ENCODE measurements at regions of chr7 and their contacts with region 1.

Region 1: GRCh38 chr7:132580717-132581285 is 4.5 kb upstream of the PLXNA4 start:
- DNase-seq: peak; percentile 70 to 76 (median 74)
- ATAC-seq: peak; percentile 25 to 60 (median 44)
- H3K4me3 ChIP-seq: no peak overlapping the region
- H3K27ac ChIP-seq: no peak overlapping the region
- H3K4me1 ChIP-seq: peaks cover 0 to 18% (median 6%) of the 10 kb centered on the region in 12 donors
- H3K27me3 ChIP-seq: peaks cover 0 to 26% (median 0%) of the 10 kb centered on the region in 9 donors
- CTCF ChIP-seq: peak; percentile 60 to 87 (median 76)
- POLR2A ChIP-seq: no peak

Region 2: GRCh38 chr7:131945313-131945911 is 635.4 kb before region 1 on chr7:
- intact Hi-C with region 1: loop called in 9 of 10 experiments (anchors 2 to 10 kb)
- DNase-seq: peak; percentile 23 to 76 (median 34)
- ATAC-seq: peak in 3 of 4 donors; percentile 58 to 73 (median 59)
- H3K4me3 ChIP-seq: peak overlapping the region in 8 of 12 donors; percentile 19 to 40 (median 29)
- H3K27ac ChIP-seq: no peak overlapping the region
- H3K4me1 ChIP-seq: peaks cover 0 to 21% (median 3%) of the 10 kb centered on the region in 12 donors
- H3K27me3 ChIP-seq: peaks cover 0 to 46% (median 9%) of the 10 kb centered on the region in 9 donors
- CTCF ChIP-seq: peak; percentile 73 to 94 (median 85)
- POLR2A ChIP-seq: no peak

Region 3: GRCh38 chr7:132154248-132154647 is 426.6 kb before region 1 on chr7:
- intact Hi-C with region 1: loop called in 1 of 10 experiments (anchors 10 kb)
- DNase-seq: no peak
- ATAC-seq: no peak
- H3K4me3 ChIP-seq: no peak overlapping the region
- H3K27ac ChIP-seq: no peak overlapping the region
- H3K4me1 ChIP-seq: no peaks in the 10 kb centered on the region
- H3K27me3 ChIP-seq: no peaks in the 10 kb centered on the region
- CTCF ChIP-seq: peak in 1 of 12 donors; percentile 10
- POLR2A ChIP-seq: no peak

Region 4: DNA sequence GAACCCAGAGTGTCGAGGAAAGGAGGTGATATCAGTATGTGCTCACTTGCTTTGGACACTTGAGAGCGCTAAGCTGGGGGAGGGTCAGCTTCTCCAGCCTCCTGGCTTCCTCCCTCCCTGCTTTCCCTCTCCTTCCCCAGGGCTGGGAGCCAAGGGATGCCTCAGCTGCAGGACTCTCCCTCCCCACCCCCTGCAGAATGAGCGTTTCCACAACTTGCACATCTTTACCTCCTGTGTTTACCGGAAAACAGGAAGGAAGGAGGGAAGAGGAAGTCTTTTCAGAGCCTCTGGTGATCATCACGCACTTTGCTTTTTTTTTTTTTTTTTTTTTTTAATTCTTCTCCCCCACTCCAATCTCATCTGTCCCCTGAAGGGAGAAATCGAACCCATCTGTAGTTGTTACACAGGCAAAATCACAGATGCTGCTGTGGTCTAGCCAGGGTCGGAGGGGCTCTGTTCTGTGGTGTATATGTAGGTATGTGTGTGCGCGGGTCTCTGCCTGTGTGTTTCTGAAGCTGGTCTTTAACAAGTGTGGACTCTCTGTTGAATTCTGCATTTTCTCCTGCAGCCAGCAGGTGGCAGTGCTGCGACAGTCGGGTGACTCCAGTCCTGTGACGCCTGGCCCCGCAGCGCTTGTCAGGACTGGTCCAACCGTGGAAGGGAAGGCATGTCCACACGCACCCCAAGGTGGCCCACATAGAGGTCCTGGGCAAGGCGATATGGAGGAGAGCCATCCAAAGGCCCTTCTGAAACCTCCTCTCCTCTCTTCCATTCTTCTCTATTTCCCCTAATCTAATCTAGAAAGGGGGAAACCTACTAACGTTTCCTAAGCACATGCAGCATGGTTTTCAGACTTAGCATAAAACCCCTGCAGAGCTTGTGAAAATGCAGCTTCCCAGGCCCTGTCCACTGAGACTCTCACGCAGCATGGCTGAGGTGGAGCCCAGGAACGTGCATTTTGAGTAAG is 262.2 kb before region 1 on chr7:
- intact Hi-C with region 1: loop called (anchors 1 to 2 kb)
- DNase-seq: peak; percentile 80 to 90 (median 85)
- ATAC-seq: peak; percentile 82 to 93 (median 88)
- H3K4me3 ChIP-seq: no peak overlapping the region
- H3K27ac ChIP-seq: no peak overlapping the region
- H3K4me1 ChIP-seq: peaks cover 0 to 17% (median 7%) of the 10 kb centered on the region in 12 donors
- H3K27me3 ChIP-seq: peaks cover 0 to 7% (median 0%) of the 10 kb centered on the region in 9 donors
- CTCF ChIP-seq: peak; percentile 81 to 94 (median 91)
- POLR2A ChIP-seq: no peak

Region 5: DNA sequence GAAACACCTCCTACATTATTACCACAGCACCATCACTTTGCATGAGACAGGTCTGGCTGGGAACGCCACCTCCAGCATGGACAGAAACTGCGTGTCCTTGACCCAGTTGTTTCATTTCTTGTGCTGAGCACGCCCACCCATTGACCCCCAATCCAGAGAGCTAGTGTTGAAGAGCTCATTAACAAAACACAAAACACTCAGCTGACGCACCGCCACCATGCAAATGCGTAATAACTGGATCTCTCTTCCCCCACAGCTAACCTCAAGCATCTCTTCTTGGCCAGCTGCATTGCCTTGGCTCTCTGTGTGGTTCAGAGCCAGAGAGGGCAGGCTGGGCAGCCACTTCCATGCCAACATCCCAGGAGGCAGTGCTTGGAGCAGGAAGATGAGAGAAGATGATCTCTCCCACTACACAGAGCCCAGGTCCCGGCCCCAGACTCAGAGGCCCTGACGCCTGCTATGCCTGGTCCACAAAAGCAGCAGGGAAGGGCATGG is 178.0 kb before region 1 on chr7:
- intact Hi-C with region 1: loop called in 7 of 10 experiments (anchors 5 to 10 kb)
- DNase-seq: peak in 4 of 5 donors; percentile 47 to 85 (median 67)
- ATAC-seq: peak; percentile 64 to 85 (median 81)
- H3K4me3 ChIP-seq: peak overlapping the region in 1 of 12 donors; percentile 14
- H3K27ac ChIP-seq: peak overlapping the region in 10 of 12 donors; percentile 31 to 81 (median 74)
- H3K4me1 ChIP-seq: peaks cover 0 to 63% (median 17%) of the 10 kb centered on the region in 12 donors
- H3K27me3 ChIP-seq: no peaks in the 10 kb centered on the region
- CTCF ChIP-seq: no peak
- POLR2A ChIP-seq: no peak

Region 6: DNA sequence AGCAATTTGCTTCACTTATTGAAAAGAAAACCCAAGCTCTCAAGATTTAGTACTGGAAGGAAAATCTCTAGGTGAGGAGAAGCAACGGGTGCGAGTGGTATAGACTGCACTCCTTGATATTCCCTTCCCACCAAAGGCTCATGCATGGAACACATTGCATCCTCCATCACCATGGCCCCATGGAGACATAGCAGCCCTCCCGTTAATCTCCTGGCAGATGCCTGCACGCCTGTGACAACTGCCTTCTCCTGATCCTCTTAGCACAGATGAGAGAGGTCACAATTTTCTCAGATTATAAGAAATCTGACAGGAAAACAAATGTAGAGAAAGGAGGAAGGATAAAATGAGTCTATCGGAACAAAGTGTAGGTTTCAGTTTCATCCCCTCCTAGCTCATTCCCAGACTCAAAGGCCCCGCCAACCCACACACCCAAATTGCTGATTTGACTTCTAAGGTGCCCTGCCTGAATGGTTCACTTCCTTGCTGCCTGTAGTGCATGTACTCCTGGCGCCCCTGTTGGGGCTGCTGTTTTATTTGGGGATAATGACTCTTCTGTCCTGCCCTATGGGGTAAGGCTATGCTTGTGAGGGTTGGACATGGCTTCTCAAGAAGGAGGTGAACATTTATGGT is 54.6 kb before region 1 on chr7:
- intact Hi-C with region 1: no loop called
- DNase-seq: no peak
- ATAC-seq: no peak
- H3K4me3 ChIP-seq: no peak overlapping the region
- H3K27ac ChIP-seq: no peak overlapping the region
- H3K4me1 ChIP-seq: no peaks in the 10 kb centered on the region
- H3K27me3 ChIP-seq: no peaks in the 10 kb centered on the region
- CTCF ChIP-seq: no peak
- POLR2A ChIP-seq: no peak

Region 7: DNA sequence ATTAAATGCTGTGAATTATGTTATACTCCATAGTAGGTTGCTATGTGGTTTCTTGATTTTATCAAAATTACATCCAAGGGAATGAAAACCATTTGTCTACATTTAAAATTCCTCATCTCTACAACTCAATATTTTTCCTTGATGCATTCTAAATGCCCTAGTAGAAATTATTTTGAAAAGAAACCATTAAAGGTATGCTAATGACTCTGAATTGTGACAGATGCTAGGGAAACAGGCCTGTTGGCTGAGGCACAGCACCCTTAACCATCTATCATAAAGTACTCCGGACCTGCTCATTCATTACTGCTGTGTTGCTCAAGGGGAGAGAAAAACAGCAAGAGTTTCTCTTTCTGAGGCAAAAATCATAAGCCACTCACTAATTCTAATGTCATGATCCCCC is 369.9 kb after region 1 on chr7:
- intact Hi-C with region 1: no loop called
- DNase-seq: no peak
- ATAC-seq: no peak
- H3K4me3 ChIP-seq: no peak overlapping the region
- H3K27ac ChIP-seq: no peak overlapping the region
- H3K4me1 ChIP-seq: no peaks in the 10 kb centered on the region
- H3K27me3 ChIP-seq: no peaks in the 10 kb centered on the region
- CTCF ChIP-seq: no peak
- POLR2A ChIP-seq: no peak

Region 8: GRCh38 chr7:133434055-133434865 is 853.5 kb after region 1 on chr7:
- intact Hi-C with region 1: loop called in 1 of 10 experiments (anchors 10 kb)
- DNase-seq: no peak
- ATAC-seq: peak in 1 of 4 donors; percentile 31
- H3K4me3 ChIP-seq: no peak overlapping the region
- H3K27ac ChIP-seq: no peak overlapping the region
- H3K4me1 ChIP-seq: peaks cover 0 to 19% (median 0%) of the 10 kb centered on the region in 12 donors
- H3K27me3 ChIP-seq: no peaks in the 10 kb centered on the region
- CTCF ChIP-seq: peak in 11 of 12 donors; percentile 20 to 59 (median 45)
- POLR2A ChIP-seq: no peak